ENCODE measurements at regions of chr1 and their contacts with region 1.

Region 1: GRCh38 chr1:156500797-156501499 is 373 bp upstream of the MEF2D start:
- DNase-seq: peak; percentile 97
- ATAC-seq: peak; percentile 66
- H3K4me3 ChIP-seq: peak overlapping the region; percentile 51 to 99 (median 91)
- H3K4me3 Mint-ChIP-seq: peak overlapping the region; percentile 93
- H3K27ac ChIP-seq: peak overlapping the region; percentile 94 to 96
- H3K27ac Mint-ChIP-seq: peak overlapping the region; percentile 99
- H3K4me1 ChIP-seq: peaks cover 74 to 79% of the 10 kb centered on the region in 2 donors
- H3K4me1 Mint-ChIP-seq: peaks cover 78% of the 10 kb centered on the region
- H3K27me3 ChIP-seq: no peaks in the 10 kb centered on the region
- H3K27me3 Mint-ChIP-seq: no peaks in the 10 kb centered on the region
- CTCF ChIP-seq: peak; percentile 80

Region 2: DNA sequence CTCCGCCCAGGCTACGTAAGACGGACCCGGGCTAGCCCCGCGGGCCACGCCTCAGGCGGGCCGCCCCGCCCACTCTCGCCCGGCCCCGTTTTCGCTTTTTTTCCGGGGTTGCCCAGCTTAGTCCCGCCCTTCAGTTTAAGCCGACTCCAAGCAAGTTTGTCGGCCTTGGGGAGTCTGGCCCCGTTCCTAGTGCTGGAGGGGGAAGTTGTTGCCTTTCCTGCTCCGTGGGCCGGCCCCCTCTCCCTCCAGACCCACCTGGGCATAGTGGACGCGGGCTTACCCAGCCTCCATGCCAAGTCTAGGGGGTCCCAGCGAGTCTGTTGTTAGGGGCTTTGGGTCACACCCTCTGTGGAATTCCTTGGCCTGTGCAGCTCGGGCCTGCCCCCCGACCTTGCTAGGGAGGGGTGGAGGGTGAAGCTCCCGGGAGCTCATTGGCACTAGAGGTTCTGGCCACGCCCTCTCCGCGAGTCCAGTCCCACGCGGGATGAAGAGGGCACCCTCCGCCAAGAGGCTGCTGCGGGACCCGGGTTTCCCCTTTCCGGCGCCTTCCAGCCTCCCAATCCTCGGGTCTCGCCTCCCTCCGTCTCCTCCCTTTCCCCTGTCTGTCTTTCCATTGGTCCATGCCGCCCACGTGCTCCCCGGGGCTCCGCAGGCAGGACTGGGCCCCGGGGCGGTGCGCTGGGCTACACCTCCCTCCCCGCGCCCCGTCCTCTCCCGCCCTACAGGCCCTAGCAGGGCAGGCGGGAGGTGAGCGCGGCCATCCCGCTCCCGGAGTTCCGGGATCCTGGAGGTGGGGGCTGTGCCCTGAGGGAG is 1176.9 kb before region 1 on chr1:
- CTCF ChIA-PET with region 1: no interaction called
- POLR2A ChIA-PET with region 1: no interaction called
- intact Hi-C with region 1: loop called (anchors 10 kb)
- DNase-seq: peak; percentile 89
- ATAC-seq: peak; percentile 74
- H3K4me3 ChIP-seq: peak overlapping the region; percentile 64 to 100 (median 97)
- H3K4me3 Mint-ChIP-seq: peak overlapping the region; percentile 92
- H3K27ac ChIP-seq: peak overlapping the region; percentile 81 to 85
- H3K27ac Mint-ChIP-seq: peak overlapping the region; percentile 87
- H3K4me1 ChIP-seq: peaks cover 17 to 35% of the 10 kb centered on the region in 2 donors
- H3K4me1 Mint-ChIP-seq: peaks cover 32% of the 10 kb centered on the region
- H3K27me3 ChIP-seq: no peaks in the 10 kb centered on the region
- H3K27me3 Mint-ChIP-seq: no peaks in the 10 kb centered on the region
- CTCF ChIP-seq: no peak

Region 3: GRCh38 chr1:156456622-156457465 is 44.1 kb before region 1 on chr1:
- CTCF ChIA-PET with region 1: interaction called, 13 read pairs
- POLR2A ChIA-PET with region 1: interaction called, 25 read pairs
- intact Hi-C with region 1: loop called (anchors 1 kb)
- DNase-seq: peak; percentile 98
- ATAC-seq: peak; percentile 85
- H3K4me3 ChIP-seq: peak overlapping the region; percentile 41 to 87 (median 84)
- H3K4me3 Mint-ChIP-seq: peak overlapping the region; percentile 96
- H3K27ac ChIP-seq: peak overlapping the region; percentile 97 to 100
- H3K27ac Mint-ChIP-seq: peak overlapping the region; percentile 98
- H3K4me1 ChIP-seq: peaks cover 3 to 15% of the 10 kb centered on the region in 2 donors
- H3K4me1 Mint-ChIP-seq: peaks cover 17% of the 10 kb centered on the region
- H3K27me3 ChIP-seq: no peaks in the 10 kb centered on the region
- H3K27me3 Mint-ChIP-seq: no peaks in the 10 kb centered on the region
- CTCF ChIP-seq: no peak

Region 4: GRCh38 chr1:156524481-156524869 is 23.5 kb after region 1 on chr1:
- CTCF ChIA-PET with region 1: interaction called, 13 read pairs
- POLR2A ChIA-PET with region 1: interaction called, 6 read pairs
- intact Hi-C with region 1: no loop called
- DNase-seq: peak; percentile 43
- ATAC-seq: peak; percentile 49
- H3K4me3 ChIP-seq: peak overlapping the region in 1 of 5 experiments; percentile 16
- H3K4me3 Mint-ChIP-seq: peak overlapping the region; percentile 71
- H3K27ac ChIP-seq: peak overlapping the region in 1 of 2 donors; percentile 49
- H3K27ac Mint-ChIP-seq: peak overlapping the region; percentile 64
- H3K4me1 ChIP-seq: peaks cover 20 to 24% of the 10 kb centered on the region in 2 donors
- H3K4me1 Mint-ChIP-seq: peaks cover 23% of the 10 kb centered on the region
- H3K27me3 ChIP-seq: no peaks in the 10 kb centered on the region
- H3K27me3 Mint-ChIP-seq: no peaks in the 10 kb centered on the region
- CTCF ChIP-seq: no peak

Region 5: GRCh38 chr1:156591432-156592157 is 90.6 kb after region 1 on chr1 and contains the start of gene NAXE:
- CTCF ChIA-PET with region 1: interaction called, 10 read pairs
- POLR2A ChIA-PET with region 1: interaction called, 12 read pairs
- intact Hi-C with region 1: no loop called
- DNase-seq: peak; percentile 86
- ATAC-seq: peak; percentile 96
- H3K4me3 ChIP-seq: peak within 1 kb of the TSS; percentile 54 to 77 (median 69)
- H3K4me3 Mint-ChIP-seq: peak within 1 kb of the TSS; percentile 93
- H3K27ac ChIP-seq: peak within 1 kb of the TSS; percentile 80 to 88
- H3K27ac Mint-ChIP-seq: peak within 1 kb of the TSS; percentile 96
- H3K4me1 ChIP-seq: peaks cover 18 to 22% of the 10 kb centered on the region in 2 donors
- H3K4me1 Mint-ChIP-seq: peaks cover 25% of the 10 kb centered on the region
- H3K27me3 ChIP-seq: no peaks in the 10 kb centered on the region
- H3K27me3 Mint-ChIP-seq: no peaks in the 10 kb centered on the region
- CTCF ChIP-seq: no peak
- total RNA-seq, gene NAXE: 56.9 and 59.7 TPM in 2 replicates

Region 6: GRCh38 chr1:156728597-156729462 is 227.9 kb after region 1 on chr1 and contains the start of gene ISG20L2:
- CTCF ChIA-PET with region 1: interaction called, 3 read pairs
- POLR2A ChIA-PET with region 1: interaction called, 3 read pairs
- intact Hi-C with region 1: loop called (anchors 5 kb)
- DNase-seq: peak; percentile 98
- ATAC-seq: peak; percentile 91
- H3K4me3 ChIP-seq: peak within 1 kb of the TSS; percentile 79 to 98 (median 95)
- H3K4me3 Mint-ChIP-seq: no peak within 1 kb of the TSS
- H3K27ac ChIP-seq: peak within 1 kb of the TSS; percentile 77 to 96
- H3K27ac Mint-ChIP-seq: peak within 1 kb of the TSS; percentile 98
- H3K4me1 ChIP-seq: peaks cover 40 to 48% of the 10 kb centered on the region in 2 donors
- H3K4me1 Mint-ChIP-seq: peaks cover 23% of the 10 kb centered on the region
- H3K27me3 ChIP-seq: no peaks in the 10 kb centered on the region
- H3K27me3 Mint-ChIP-seq: no peaks in the 10 kb centered on the region
- CTCF ChIP-seq: no peak
- total RNA-seq, gene ISG20L2: 51.7 and 52.5 TPM in 2 replicates

Region 7: DNA sequence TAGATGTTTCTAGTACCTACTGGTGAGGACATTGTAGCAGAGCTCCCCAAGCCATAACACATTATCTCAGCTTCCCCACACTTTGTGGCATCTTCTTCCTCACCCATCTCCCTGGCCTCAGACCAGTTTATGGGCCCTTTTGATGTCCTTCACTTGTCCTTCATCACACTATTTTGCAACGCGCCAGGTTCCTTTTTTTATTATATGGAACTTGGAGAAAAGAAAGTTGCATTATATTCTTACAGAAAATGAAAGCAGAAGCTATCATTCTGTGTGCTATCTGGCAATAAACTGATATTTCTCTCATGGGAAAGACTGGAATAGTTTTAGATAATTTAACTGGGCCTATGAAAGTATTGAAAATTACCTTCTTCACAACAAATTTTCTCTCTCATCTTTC is 834.1 kb after region 1 on chr1:
- CTCF ChIA-PET with region 1: no interaction called
- POLR2A ChIA-PET with region 1: no interaction called
- intact Hi-C with region 1: no loop called
- DNase-seq: no peak
- ATAC-seq: no peak
- H3K4me3 ChIP-seq: no peak overlapping the region
- H3K4me3 Mint-ChIP-seq: no peak overlapping the region
- H3K27ac ChIP-seq: no peak overlapping the region
- H3K27ac Mint-ChIP-seq: no peak overlapping the region
- H3K4me1 ChIP-seq: no peaks in the 10 kb centered on the region
- H3K4me1 Mint-ChIP-seq: no peaks in the 10 kb centered on the region
- H3K27me3 ChIP-seq: peaks cover 0 to 4% (median 2%) of the 10 kb centered on the region in 4 experiments
- H3K27me3 Mint-ChIP-seq: peaks cover 39% of the 10 kb centered on the region
- CTCF ChIP-seq: no peak